ENCODE measurements at regions of chr4 and their contacts with region 1.

Region 1: GRCh38 chr4:74364652-74365491 is at the start of gene EREG:
- DNase-seq: peak; percentile 36
- H3K4me3 ChIP-seq: peak within 1 kb of the TSS; percentile 44
- H3K27ac ChIP-seq: no peak within 1 kb of the TSS
- H3K4me1 ChIP-seq: no peaks in the 10 kb centered on the region
- H3K27me3 ChIP-seq: no peaks in the 10 kb centered on the region
- CTCF ChIP-seq: no peak
- total RNA-seq, gene EREG: 0.50 and 0.84 TPM in 2 replicates

Region 2: DNA sequence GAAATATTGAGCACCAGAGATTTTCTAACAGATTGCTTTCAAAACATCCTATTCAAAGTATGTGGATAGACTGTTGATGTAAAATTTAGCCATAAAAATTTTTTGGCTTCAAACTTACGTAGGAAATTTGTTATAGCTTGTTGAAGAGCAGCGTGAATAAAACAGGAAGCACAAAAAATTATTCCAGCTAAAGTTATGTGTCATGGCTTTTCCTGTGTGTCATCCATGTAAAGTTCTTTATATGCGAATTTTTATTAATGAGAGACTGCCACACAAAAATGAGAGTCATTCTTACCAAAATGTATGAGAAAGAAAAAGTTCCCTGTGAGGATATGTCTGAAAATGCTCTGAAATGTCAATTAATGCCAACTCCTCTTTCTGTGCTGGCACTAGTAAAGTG is 37.1 kb before region 1 on chr4:
- CTCF ChIA-PET with region 1: no interaction called
- POLR2A ChIA-PET with region 1: no interaction called
- intact Hi-C with region 1: loop called (anchors 5 kb)
- DNase-seq: peak; percentile 12
- H3K4me3 ChIP-seq: no peak overlapping the region
- H3K27ac ChIP-seq: no peak overlapping the region
- H3K4me1 ChIP-seq: no peaks in the 10 kb centered on the region
- H3K27me3 ChIP-seq: no peaks in the 10 kb centered on the region
- CTCF ChIP-seq: no peak

Region 3: GRCh38 chr4:74742185-74742584 is 377.3 kb after region 1 on chr4:
- CTCF ChIA-PET with region 1: no interaction called
- POLR2A ChIA-PET with region 1: no interaction called
- intact Hi-C with region 1: no loop called
- DNase-seq: no peak
- H3K4me3 ChIP-seq: no peak overlapping the region
- H3K27ac ChIP-seq: no peak overlapping the region
- H3K4me1 ChIP-seq: no peaks in the 10 kb centered on the region
- H3K27me3 ChIP-seq: no peaks in the 10 kb centered on the region
- CTCF ChIP-seq: no peak